WTC11 (cell line): ENCODE measurements at regions of chr11 and their contacts with region 1.

Region 1: DNA sequence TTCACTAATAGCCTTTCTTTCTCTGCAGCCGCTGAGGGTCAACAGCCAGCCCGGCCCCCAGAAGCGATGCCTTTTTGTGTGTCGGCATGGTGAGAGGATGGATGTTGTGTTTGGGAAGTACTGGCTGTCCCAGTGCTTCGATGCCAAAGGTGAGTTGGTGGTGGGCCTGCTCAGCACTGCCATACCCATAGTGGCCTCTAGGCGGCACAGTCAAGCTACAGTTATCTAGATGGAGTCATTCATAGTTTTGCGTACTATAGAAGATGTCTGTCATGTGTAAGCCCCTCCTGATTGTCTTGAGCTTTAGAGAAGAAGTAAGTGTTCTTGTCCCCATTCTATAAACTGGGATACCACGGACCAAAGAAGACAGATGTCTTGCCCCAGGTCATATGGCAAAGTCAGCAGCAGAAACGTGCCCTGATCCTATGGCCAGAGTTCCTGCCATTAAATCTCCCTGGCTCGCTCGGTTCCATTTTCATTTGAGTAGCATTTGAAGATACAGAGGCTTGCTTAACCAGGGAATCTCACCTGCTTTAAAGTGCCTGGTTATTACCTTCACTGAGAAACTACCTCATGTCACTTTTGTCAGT is 42.1 kb upstream of the CRTAM start:
- DNase-seq: peak; percentile 84
- ATAC-seq: peak; percentile 98
- H3K4me3 Mint-ChIP-seq: no peak overlapping the region
- H3K27ac Mint-ChIP-seq: no peak overlapping the region
- H3K4me1 Mint-ChIP-seq: peaks cover 4% of the 10 kb centered on the region; the same call in 1 of the 2 replicates
- H3K27me3 Mint-ChIP-seq: no peaks in the 10 kb centered on the region
- CTCF ChIP-seq: peak; percentile 86

Region 2: GRCh38 chr11:122628810-122629555 is 167.2 kb before region 1 on chr11:
- CTCF ChIA-PET with region 1: interaction called, 10 read pairs
- POLR2A ChIA-PET with region 1: no interaction called
- DNase-seq: peak; percentile 81
- ATAC-seq: peak; percentile 98
- H3K4me3 Mint-ChIP-seq: no peak overlapping the region
- H3K27ac Mint-ChIP-seq: no peak overlapping the region
- H3K4me1 Mint-ChIP-seq: no peaks in the 10 kb centered on the region; the same call in 1 of the 2 replicates
- H3K27me3 Mint-ChIP-seq: no peaks in the 10 kb centered on the region; the same call in 1 of the 2 replicates
- CTCF ChIP-seq: peak; percentile 63; the same call in 1 of the 2 replicates

Region 3: GRCh38 chr11:122781378-122782195 is 14.6 kb before region 1 on chr11:
- CTCF ChIA-PET with region 1: interaction called, 22 read pairs
- POLR2A ChIA-PET with region 1: no interaction called
- DNase-seq: peak; percentile 92
- ATAC-seq: peak; percentile 95
- H3K4me3 Mint-ChIP-seq: no peak overlapping the region
- H3K27ac Mint-ChIP-seq: no peak overlapping the region
- H3K4me1 Mint-ChIP-seq: peaks cover 18% of the 10 kb centered on the region
- H3K27me3 Mint-ChIP-seq: no peaks in the 10 kb centered on the region
- CTCF ChIP-seq: peak; percentile 85

Region 4: DNA sequence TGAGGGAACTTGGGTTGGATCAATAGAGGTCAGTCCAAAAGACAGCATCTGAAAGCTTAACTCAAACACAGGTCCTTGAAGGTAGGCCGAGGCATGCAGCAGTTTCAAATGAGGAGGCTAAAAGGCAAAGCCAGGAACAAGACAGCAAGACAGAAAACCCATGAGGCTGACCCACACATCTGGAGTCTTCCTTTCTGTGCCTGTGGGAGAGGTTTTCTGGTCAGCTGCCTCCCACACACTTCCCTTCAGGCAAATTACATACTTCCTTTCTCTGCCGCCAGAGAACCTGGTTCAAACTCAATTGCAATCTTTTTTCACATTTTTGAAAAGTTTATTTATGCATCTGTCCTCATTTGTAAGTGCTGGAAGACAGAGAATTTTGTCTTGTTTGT is 12.3 kb after region 1 on chr11:
- CTCF ChIA-PET with region 1: interaction called, 21 read pairs
- POLR2A ChIA-PET with region 1: no interaction called
- DNase-seq: no peak
- ATAC-seq: no peak
- H3K4me3 Mint-ChIP-seq: no peak overlapping the region
- H3K27ac Mint-ChIP-seq: peak overlapping the region; percentile 38; the same call in 1 of the 2 replicates
- H3K4me1 Mint-ChIP-seq: peaks cover 63% of the 10 kb centered on the region
- H3K27me3 Mint-ChIP-seq: no peaks in the 10 kb centered on the region
- CTCF ChIP-seq: no peak

Region 5: GRCh38 chr11:122814401-122814800 is 18.2 kb after region 1 on chr11:
- CTCF ChIA-PET with region 1: interaction called, 21 read pairs
- POLR2A ChIA-PET with region 1: no interaction called
- DNase-seq: no peak
- ATAC-seq: peak; percentile 34
- H3K4me3 Mint-ChIP-seq: no peak overlapping the region
- H3K27ac Mint-ChIP-seq: 0 out of 2 replicates have a peak overlapping the region, but pooled peaks have one; percentile 2
- H3K4me1 Mint-ChIP-seq: peaks cover 57% of the 10 kb centered on the region
- H3K27me3 Mint-ChIP-seq: no peaks in the 10 kb centered on the region; the same call in 1 of the 2 replicates
- CTCF ChIP-seq: no peak